ENCODE measurements at regions of chr6 and their contacts with region 1.

Region 1: GRCh38 chr6:63352587-63353285 is 33.0 kb upstream of the LGSN start:
- DNase-seq: peak; percentile 67
- H3K4me3 Mint-ChIP-seq: no peak overlapping the region
- H3K27ac Mint-ChIP-seq: no peak overlapping the region
- H3K4me1 Mint-ChIP-seq: peaks cover 8% of the 10 kb centered on the region
- H3K27me3 Mint-ChIP-seq: no peaks in the 10 kb centered on the region
- CTCF ChIP-seq: peak; percentile 72

Region 2: GRCh38 chr6:63527658-63528514 is 175.2 kb after region 1 on chr6:
- CTCF ChIA-PET with region 1: interaction called, 10 read pairs
- POLR2A ChIA-PET with region 1: interaction called, 4 read pairs
- intact Hi-C with region 1: no loop called
- DNase-seq: peak; percentile 98
- H3K4me3 Mint-ChIP-seq: peak overlapping the region; percentile 33
- H3K27ac Mint-ChIP-seq: peak overlapping the region; percentile 84
- H3K4me1 Mint-ChIP-seq: peaks cover 26% of the 10 kb centered on the region
- H3K27me3 Mint-ChIP-seq: no peaks in the 10 kb centered on the region
- CTCF ChIP-seq: no peak

Region 3: GRCh38 chr6:63560801-63561672 is 208.3 kb after region 1 on chr6:
- CTCF ChIA-PET with region 1: no interaction called
- POLR2A ChIA-PET with region 1: interaction called, 17 read pairs
- intact Hi-C with region 1: no loop called
- DNase-seq: peak; percentile 43
- H3K4me3 Mint-ChIP-seq: no peak overlapping the region
- H3K27ac Mint-ChIP-seq: no peak overlapping the region
- H3K4me1 Mint-ChIP-seq: peaks cover 32% of the 10 kb centered on the region
- H3K27me3 Mint-ChIP-seq: no peaks in the 10 kb centered on the region
- CTCF ChIP-seq: no peak

Region 4: DNA sequence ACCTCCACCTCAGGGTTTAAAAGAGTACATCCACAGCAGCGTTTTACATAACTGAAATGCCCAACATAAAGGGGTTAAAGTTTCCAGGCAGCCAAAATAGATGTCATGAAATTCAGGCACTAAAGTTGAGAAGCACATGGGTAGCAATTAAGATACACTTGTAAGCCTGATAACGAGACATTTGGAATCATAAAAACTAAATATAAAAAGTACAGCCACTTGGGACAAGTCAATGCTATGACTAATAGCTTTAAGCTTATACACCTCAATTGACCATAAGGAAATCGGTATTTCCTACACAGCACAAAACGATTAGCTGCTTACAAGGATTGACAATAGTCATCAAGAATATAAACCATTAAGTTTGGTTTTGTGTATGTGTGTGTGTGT is 231.4 kb after region 1 on chr6:
- CTCF ChIA-PET with region 1: interaction called, 18 read pairs
- POLR2A ChIA-PET with region 1: interaction called, 7 read pairs
- intact Hi-C with region 1: no loop called
- DNase-seq: peak; percentile 44
- H3K4me3 Mint-ChIP-seq: no peak overlapping the region
- H3K27ac Mint-ChIP-seq: no peak overlapping the region
- H3K4me1 Mint-ChIP-seq: peaks cover 4% of the 10 kb centered on the region
- H3K27me3 Mint-ChIP-seq: no peaks in the 10 kb centered on the region
- CTCF ChIP-seq: no peak

Region 5: DNA sequence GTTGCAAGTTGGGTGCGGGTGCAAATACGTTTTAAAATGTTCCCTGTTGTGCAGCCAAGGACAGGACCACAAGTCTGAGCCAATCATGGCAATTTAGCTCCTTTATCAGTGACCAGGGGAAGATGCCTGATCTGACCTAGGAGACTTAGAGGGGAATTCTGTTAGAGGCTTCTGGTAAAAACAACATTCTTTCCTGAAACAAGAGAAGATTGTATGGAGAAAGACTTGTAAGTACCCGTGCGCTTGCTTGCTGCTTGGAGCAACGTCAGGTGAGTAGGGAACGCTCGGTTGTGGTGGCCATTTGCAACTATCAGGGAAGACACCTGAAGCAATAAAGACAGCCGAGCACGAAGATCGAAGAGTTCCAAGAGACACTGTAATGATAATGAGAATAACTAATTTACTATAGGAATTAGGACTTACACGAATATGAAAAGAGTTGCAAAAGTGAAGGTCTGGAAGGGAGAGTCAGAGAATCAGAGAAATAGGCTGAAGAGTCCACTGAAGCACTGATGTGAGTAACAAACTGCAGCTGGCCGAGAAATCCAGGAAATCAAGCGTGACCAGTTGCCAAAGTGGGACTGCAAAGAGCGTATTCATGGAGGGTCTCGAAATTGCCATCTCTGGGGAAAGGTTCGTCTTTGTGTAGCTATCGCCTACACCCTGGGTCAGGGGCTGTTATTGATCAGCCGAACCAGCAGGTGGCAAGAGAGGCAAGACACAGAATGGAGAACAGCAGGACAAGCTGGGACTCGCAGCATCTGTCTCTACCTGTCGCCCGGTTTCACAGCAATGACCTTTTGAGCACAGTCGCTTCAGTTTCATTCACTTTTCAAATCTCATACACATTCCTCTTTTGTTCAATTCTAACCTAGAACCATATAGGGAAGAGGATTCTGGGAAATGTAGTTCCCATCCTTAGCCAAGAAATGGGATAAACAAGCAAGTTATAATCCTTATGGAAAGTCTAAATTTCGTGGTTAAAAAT is 245.6 kb after region 1 on chr6:
- CTCF ChIA-PET with region 1: interaction called, 61 read pairs
- POLR2A ChIA-PET with region 1: interaction called, 24 read pairs
- intact Hi-C with region 1: loop called (anchors 1 kb)
- DNase-seq: peak; percentile 84
- H3K4me3 Mint-ChIP-seq: peak overlapping the region; percentile 72
- H3K27ac Mint-ChIP-seq: peak overlapping the region; percentile 4
- H3K4me1 Mint-ChIP-seq: peaks cover 7% of the 10 kb centered on the region
- H3K27me3 Mint-ChIP-seq: no peaks in the 10 kb centered on the region
- CTCF ChIP-seq: peak; percentile 79

Region 6: DNA sequence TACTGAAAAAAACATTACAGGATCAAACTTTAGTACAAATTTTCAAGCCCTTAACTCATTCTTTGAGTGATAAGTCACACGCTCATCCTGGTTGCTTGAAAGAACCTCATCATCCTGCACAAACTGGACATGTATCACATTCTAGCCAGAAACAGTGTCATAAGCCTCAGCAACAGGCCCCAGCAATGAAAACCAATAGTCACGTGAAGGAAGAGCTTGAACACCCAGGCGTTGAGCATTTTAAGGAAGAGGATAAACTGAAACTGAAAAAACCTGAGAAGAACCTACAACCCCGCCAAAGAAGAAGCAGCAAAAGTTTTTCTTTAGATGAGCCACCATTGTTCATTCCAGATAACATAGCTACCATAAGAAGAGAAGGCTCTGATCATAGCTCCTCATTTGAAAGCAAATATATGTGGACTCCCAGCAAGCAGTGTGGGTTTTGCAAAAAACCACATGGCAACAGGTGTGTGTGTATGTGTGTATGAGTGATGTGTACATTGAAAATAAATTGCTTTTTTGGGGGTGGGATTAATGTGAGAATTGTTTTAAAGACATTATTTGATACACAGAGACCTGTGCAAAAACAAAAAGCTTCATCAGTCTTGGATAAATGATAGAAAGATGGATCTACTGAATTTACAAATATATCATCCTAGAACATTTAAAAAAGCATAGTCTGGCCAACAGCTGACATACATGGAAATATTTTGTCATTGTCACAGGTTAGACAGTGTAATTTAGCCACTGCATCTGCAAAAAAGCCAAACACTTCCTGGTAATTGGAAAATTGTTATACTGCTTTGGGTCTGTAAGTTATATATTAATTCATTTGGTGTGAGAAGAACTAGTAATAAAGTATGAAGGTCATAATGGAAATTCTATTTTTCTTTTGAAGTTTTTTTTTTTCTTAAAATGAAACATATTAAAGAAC is 333.0 kb after region 1 on chr6:
- CTCF ChIA-PET with region 1: interaction called, 26 read pairs
- POLR2A ChIA-PET with region 1: interaction called, 5 read pairs
- intact Hi-C with region 1: loop called (anchors 5 kb)
- DNase-seq: no peak
- H3K4me3 Mint-ChIP-seq: no peak overlapping the region
- H3K27ac Mint-ChIP-seq: no peak overlapping the region
- H3K4me1 Mint-ChIP-seq: no peaks in the 10 kb centered on the region
- H3K27me3 Mint-ChIP-seq: no peaks in the 10 kb centered on the region
- CTCF ChIP-seq: no peak

Region 7: GRCh38 chr6:63764318-63764916 is 411.7 kb after region 1 on chr6:
- CTCF ChIA-PET with region 1: interaction called, 58 read pairs
- POLR2A ChIA-PET with region 1: interaction called, 11 read pairs
- intact Hi-C with region 1: loop called (anchors 1 kb)
- DNase-seq: peak; percentile 62
- H3K4me3 Mint-ChIP-seq: no peak overlapping the region
- H3K27ac Mint-ChIP-seq: no peak overlapping the region
- H3K4me1 Mint-ChIP-seq: no peaks in the 10 kb centered on the region
- H3K27me3 Mint-ChIP-seq: no peaks in the 10 kb centered on the region
- CTCF ChIP-seq: peak; percentile 51

Measured in MCF 10A (cell line).